ENCODE measurements at regions of chr22 and their contacts with region 1.

Region 1: DNA sequence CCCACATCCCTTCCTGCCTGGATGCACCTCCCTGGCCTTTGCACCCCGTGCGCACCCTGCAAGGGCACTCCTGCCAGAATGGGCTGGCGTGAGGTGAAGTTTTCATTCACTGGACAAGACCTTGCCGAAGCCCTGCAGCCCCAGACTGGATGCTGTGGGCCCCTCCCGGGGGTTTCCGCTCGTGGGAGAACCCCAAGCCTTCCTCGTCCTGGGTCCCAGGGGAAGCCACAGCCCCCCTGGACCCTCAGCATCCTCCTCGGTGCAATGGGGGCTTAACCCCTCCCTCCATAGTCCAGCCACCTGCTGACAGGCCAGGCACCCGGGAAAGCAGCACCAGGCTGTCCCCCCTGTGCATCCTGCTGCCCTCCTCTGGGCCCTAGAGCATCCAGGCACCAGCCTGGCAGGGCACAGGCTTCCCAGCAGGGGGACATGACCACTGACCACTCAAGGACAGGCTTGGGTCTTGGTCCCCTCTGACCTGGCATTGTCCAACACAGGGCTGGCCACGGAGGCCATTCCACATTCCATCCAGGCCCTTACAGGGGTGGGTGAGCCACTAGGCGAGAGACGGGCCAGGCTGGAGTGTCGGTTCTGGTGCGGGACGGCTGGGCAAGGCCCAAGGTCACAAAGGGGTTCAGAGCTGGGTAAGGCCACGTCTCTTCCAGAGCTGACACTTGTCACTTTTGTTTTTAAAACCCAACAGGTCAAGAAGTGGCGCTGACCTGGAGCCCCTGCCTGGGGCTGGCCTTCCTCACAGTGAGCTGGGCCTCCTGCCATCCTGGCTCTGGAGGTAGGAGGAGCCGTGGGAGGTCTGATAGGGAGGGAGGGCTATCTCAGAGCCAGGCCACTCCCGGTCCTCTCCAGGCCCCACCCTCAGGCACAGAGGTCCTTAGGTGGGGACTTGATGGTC is 41.5 kb upstream of the PPARA start:
- DNase-seq: no peak
- ATAC-seq: peak; percentile 48
- H3K4me3 Mint-ChIP-seq: no peak overlapping the region
- H3K27ac Mint-ChIP-seq: 0 out of 2 replicates have a peak overlapping the region, but pooled peaks have one; percentile 8
- H3K4me1 Mint-ChIP-seq: peaks cover 3% of the 10 kb centered on the region; the same call in 1 of the 2 replicates
- H3K27me3 Mint-ChIP-seq: no peaks in the 10 kb centered on the region
- CTCF ChIP-seq: no peak

Region 2: GRCh38 chr22:46091277-46091977 is 17.4 kb before region 1 on chr22:
- CTCF ChIA-PET with region 1: no interaction called
- POLR2A ChIA-PET with region 1: no interaction called
- DNase-seq: no peak
- ATAC-seq: no peak
- H3K4me3 Mint-ChIP-seq: no peak overlapping the region
- H3K27ac Mint-ChIP-seq: no peak overlapping the region
- H3K4me1 Mint-ChIP-seq: no peaks in the 10 kb centered on the region
- H3K27me3 Mint-ChIP-seq: no peaks in the 10 kb centered on the region
- CTCF ChIP-seq: no peak

Region 3: GRCh38 chr22:46122511-46122971 is 13.7 kb after region 1 on chr22:
- CTCF ChIA-PET with region 1: interaction called, 11 read pairs
- POLR2A ChIA-PET with region 1: no interaction called
- DNase-seq: peak; percentile 77
- ATAC-seq: peak; percentile 77
- H3K4me3 Mint-ChIP-seq: no peak overlapping the region
- H3K27ac Mint-ChIP-seq: no peak overlapping the region
- H3K4me1 Mint-ChIP-seq: no peaks in the 10 kb centered on the region
- H3K27me3 Mint-ChIP-seq: no peaks in the 10 kb centered on the region
- CTCF ChIP-seq: peak; percentile 90

Measured in WTC11 (cell line).